IMR-90 (cell line): ENCODE measurements at regions of chr1 and their contacts with region 1.

Region 1: GRCh38 chr1:170664828-170665612 is 1.1 kb downstream of the PRRX1 start:
- DNase-seq: peak; percentile 61
- ATAC-seq: peak; percentile 67
- H3K4me3 ChIP-seq: peak overlapping the region; percentile 88
- H3K27ac ChIP-seq: peak overlapping the region; percentile 80
- H3K4me1 ChIP-seq: peaks cover 14% of the 10 kb centered on the region
- H3K27me3 ChIP-seq: no peaks in the 10 kb centered on the region
- CTCF ChIP-seq: peak; percentile 38
- POLR2A ChIP-seq: 0 out of 2 replicates have a peak, but pooled peaks have one; percentile 30
- RAD21 ChIP-seq: peak; percentile 28

Region 2: DNA sequence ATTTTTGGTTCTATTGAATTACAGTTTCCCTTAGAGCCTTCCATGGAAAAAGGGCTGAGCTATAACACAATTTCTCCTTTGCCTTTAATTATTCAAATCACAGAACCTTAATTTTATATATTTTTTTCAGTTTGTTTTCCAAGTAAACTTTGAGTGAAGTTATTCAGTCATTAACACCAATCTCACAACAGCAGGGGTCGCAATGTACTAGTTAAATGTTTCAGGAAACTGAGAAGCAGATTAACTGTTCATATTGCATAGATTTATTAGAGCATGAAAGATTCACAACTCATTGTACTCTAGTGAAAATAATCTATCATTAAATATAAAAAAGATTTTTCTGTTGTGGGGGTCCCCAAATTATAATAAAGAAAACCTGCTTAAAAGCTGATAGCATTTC is 654.6 kb before region 1 on chr1:
- CTCF ChIA-PET with region 1: no interaction called
- POLR2A ChIA-PET with region 1: no interaction called
- dilution Hi-C with region 1: no loop called
- in situ Hi-C with region 1: no loop called
- intact Hi-C with region 1: loop called (anchors 1 kb)
- DNase-seq: peak; percentile 55
- ATAC-seq: peak; percentile 56
- H3K4me3 ChIP-seq: no peak overlapping the region
- H3K27ac ChIP-seq: no peak overlapping the region
- H3K4me1 ChIP-seq: no peaks in the 10 kb centered on the region
- H3K27me3 ChIP-seq: no peaks in the 10 kb centered on the region
- CTCF ChIP-seq: peak; percentile 52
- POLR2A ChIP-seq: no peak
- RAD21 ChIP-seq: peak; percentile 58

Region 3: DNA sequence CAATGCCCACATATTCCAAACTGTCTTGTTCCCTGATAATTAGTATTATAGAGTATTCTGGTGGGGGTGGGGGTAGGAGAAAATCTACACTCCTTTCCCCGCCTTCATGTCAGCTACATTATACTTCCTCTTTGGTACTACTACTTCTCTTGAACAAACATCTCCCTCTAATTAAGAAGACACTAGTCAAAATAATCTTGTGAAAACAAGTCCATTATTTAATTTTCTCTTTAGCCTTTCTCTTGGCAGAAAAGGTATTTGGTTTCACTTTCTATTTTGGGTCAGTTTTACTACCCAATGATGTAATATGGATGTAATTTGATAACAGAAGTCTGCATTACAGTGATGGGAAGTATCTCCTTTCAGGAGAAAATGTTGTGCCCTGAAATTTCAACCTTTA is 496.8 kb before region 1 on chr1:
- CTCF ChIA-PET with region 1: no interaction called
- POLR2A ChIA-PET with region 1: no interaction called
- dilution Hi-C with region 1: no loop called
- in situ Hi-C with region 1: no loop called
- intact Hi-C with region 1: loop called (anchors 2 kb)
- DNase-seq: peak; percentile 64
- ATAC-seq: peak; percentile 46; the same call in 1 of the 2 replicates
- H3K4me3 ChIP-seq: no peak overlapping the region
- H3K27ac ChIP-seq: no peak overlapping the region
- H3K4me1 ChIP-seq: 0 out of 2 replicates have a peak, but pooled peaks cover 2% of the 10 kb centered on the region
- H3K27me3 ChIP-seq: no peaks in the 10 kb centered on the region
- CTCF ChIP-seq: no peak
- POLR2A ChIP-seq: no peak
- RAD21 ChIP-seq: no peak

Region 4: GRCh38 chr1:170410401-170411166 is 254.4 kb before region 1 on chr1:
- CTCF ChIA-PET with region 1: no interaction called
- POLR2A ChIA-PET with region 1: no interaction called
- dilution Hi-C with region 1: no loop called
- in situ Hi-C with region 1: no loop called
- intact Hi-C with region 1: loop called (anchors 10 kb)
- DNase-seq: peak; percentile 86
- ATAC-seq: peak; percentile 78
- H3K4me3 ChIP-seq: no peak overlapping the region
- H3K27ac ChIP-seq: peak overlapping the region; percentile 95; the same call in 1 of the 2 replicates
- H3K4me1 ChIP-seq: peaks cover 8% of the 10 kb centered on the region
- H3K27me3 ChIP-seq: no peaks in the 10 kb centered on the region
- CTCF ChIP-seq: no peak
- POLR2A ChIP-seq: no peak
- RAD21 ChIP-seq: no peak

Region 5: DNA sequence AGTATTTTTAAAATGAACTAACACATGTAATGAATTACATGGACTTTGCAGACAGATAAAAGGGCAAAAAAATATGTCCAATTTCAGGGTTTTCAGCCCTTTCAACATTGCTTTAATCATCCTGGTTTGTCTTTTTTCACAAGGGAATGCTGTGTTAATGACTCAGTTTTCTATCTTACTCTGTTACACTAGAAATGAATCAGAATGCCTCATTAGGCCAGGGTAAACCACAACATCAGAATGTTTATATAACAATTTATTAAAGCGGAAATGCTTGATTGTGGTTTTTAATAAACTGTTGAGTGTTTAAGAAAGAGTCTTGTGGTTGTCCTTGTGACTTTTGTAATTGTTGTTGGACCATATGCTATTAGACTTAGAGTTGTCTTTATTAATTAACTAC is 119.5 kb before region 1 on chr1:
- CTCF ChIA-PET with region 1: no interaction called
- POLR2A ChIA-PET with region 1: no interaction called
- dilution Hi-C with region 1: no loop called
- in situ Hi-C with region 1: no loop called
- intact Hi-C with region 1: loop called (anchors 5 kb)
- DNase-seq: peak; percentile 88
- ATAC-seq: peak; percentile 86
- H3K4me3 ChIP-seq: no peak overlapping the region
- H3K27ac ChIP-seq: no peak overlapping the region
- H3K4me1 ChIP-seq: peaks cover 4% of the 10 kb centered on the region
- H3K27me3 ChIP-seq: no peaks in the 10 kb centered on the region
- CTCF ChIP-seq: no peak
- POLR2A ChIP-seq: no peak
- RAD21 ChIP-seq: peak; percentile 7; the same call in 1 of the 2 replicates

Region 6: DNA sequence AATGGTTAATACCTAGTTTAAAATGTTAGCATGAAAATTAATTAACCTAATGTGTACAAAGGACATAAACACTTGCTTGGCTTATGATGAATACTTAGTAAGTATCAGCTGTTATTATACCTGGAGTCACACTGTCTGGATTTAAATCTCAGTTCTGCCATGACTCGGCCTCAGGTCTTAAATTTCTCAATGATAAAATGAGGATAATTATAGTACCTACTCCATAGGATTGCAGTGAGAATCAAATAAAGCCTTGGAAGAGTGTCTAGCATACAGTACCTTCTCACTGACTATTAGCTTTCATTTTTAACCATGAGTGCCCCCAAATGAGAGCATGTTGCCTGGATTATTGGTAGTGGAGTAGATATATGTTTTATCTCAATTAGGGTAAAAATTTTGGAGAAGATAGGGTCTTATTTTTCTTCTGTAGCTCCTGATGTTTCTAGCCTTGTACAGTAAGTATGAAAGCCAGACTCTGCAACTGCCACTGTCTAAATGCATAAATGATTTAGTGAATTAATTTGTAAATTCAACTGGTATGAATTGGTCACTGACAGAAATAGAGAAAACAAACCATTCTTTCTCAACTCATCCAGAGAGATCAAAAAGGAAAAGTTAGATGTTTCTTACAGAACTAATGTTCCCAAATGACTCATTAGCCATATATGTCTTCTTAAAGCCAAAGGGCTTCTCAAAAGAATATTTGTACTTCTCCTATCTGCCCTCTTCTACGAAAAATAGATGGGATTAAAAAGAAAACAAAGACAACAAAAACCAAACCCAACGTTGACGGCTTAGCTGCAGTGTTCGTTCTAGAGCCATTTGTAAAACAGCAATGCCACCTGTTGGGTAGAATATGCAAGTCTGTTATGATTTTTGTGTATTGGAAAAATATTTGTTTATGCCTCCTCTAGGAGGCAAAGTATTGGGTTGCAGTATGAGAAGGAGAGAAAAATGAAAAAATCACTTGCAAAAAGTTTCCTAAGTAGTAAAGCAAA is 216.5 kb after region 1 on chr1:
- CTCF ChIA-PET with region 1: no interaction called
- POLR2A ChIA-PET with region 1: no interaction called
- dilution Hi-C with region 1: no loop called
- in situ Hi-C with region 1: no loop called
- intact Hi-C with region 1: loop called (anchors 5 kb)
- DNase-seq: peak; percentile 42
- ATAC-seq: peak; percentile 63
- H3K4me3 ChIP-seq: no peak overlapping the region
- H3K27ac ChIP-seq: no peak overlapping the region
- H3K4me1 ChIP-seq: no peaks in the 10 kb centered on the region
- H3K27me3 ChIP-seq: no peaks in the 10 kb centered on the region
- CTCF ChIP-seq: peak; percentile 52
- POLR2A ChIP-seq: no peak
- RAD21 ChIP-seq: peak; percentile 74

Region 7: DNA sequence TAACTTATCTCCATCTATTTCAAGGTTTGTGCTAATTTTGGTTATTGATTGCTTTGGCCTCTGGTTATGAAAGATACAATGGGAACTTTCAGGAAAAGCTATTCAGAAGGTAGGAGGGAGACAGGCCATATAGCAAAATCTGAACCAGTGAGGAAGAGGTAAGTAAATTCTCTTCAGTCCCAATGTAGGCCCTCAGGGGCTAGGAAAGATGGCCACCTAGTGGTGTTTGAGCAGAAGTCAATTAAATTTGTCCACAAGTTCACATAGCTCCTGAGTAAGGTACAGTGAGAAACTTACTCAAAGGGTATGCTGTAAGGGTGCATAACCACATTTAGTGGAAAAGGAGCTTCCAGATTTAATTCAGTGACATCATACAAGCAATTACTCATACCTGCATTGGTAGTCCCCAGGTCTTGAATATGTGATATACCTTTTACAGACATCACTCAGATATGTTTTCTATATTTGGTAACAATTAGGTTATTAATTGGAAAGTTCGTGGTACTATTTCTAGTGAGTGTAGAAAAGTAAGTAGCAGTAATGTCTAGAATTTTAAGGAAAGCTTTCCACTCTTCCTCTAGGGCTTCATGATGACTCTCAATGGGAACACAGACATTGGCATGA is 561.8 kb after region 1 on chr1:
- CTCF ChIA-PET with region 1: no interaction called
- POLR2A ChIA-PET with region 1: no interaction called
- dilution Hi-C with region 1: no loop called
- in situ Hi-C with region 1: no loop called
- intact Hi-C with region 1: loop called (anchors 10 kb)
- DNase-seq: peak; percentile 80
- ATAC-seq: peak; percentile 93
- H3K4me3 ChIP-seq: no peak overlapping the region
- H3K27ac ChIP-seq: no peak overlapping the region
- H3K4me1 ChIP-seq: peaks cover 2% of the 10 kb centered on the region
- H3K27me3 ChIP-seq: no peaks in the 10 kb centered on the region
- CTCF ChIP-seq: peak; percentile 95
- POLR2A ChIP-seq: no peak
- RAD21 ChIP-seq: peak; percentile 99